ENCODE measurements at regions of chr15 and their contacts with region 1.

Region 1: DNA sequence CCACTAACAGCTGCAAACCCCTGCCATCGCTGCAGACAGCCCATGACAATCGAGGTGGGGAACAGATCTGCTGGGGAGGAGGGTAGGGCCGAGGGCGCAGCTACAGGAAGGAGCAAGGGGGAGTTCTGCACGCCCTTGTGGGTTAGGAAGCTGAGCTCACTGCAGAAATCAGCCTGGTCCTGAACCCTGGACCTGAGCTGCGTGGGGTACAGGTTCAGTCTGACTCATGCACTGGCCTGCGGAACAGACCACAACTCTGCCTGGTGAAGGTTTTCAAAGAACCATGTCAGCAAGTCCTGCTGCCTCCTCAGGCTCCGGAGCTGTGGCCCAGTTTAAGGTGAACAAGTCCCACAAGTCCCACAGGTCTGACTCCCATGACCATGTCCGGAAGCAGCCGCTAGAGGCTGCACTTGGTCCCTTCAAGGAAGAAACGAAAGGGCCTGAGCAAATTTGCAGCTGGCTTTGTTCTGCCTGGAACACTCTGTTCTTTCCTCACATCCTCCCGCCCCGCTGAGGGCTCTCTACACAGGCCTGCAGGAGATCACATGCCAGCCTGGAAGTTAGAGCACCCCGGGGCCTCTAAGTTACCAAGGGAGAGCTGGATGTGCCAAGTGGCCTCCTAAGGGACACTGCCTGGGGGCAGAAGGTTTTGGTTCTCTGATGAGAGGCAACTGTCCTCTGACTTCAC is 49.4 kb upstream of the AKAP13 start:
- DNase-seq: peak; percentile 90
- H3K4me3 Mint-ChIP-seq: peak overlapping the region; percentile 82
- H3K27ac Mint-ChIP-seq: peak overlapping the region; percentile 77
- H3K4me1 Mint-ChIP-seq: peaks cover 38% of the 10 kb centered on the region
- H3K27me3 Mint-ChIP-seq: no peaks in the 10 kb centered on the region

Region 2: DNA sequence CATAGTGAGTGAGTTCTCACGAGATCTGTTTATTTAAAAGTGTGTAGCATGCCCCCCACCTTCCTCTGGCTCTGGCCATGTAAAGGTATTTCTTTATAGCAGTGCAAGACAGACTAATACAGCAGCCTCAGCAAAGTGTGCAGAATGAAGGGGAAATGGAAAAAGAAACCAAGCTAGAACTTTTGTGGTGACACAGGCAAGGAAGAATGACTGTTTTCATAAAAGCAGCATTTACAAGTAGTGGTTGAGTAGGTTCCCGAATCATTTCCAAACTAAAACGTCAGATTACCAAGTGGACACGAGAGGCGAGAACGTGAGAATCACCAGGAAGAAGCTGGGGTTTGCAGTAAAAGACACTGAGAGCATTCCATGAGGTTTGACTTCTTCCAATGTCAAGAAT is 50.8 kb before region 1 on chr15:
- CTCF ChIA-PET with region 1: no interaction called
- POLR2A ChIA-PET with region 1: no interaction called
- intact Hi-C with region 1: no loop called
- DNase-seq: no peak
- H3K4me3 Mint-ChIP-seq: no peak overlapping the region
- H3K27ac Mint-ChIP-seq: no peak overlapping the region
- H3K4me1 Mint-ChIP-seq: peaks cover 5% of the 10 kb centered on the region
- H3K27me3 Mint-ChIP-seq: no peaks in the 10 kb centered on the region

Region 3: GRCh38 chr15:85318048-85318731 is 12.9 kb before region 1 on chr15:
- CTCF ChIA-PET with region 1: interaction called, 41 read pairs
- POLR2A ChIA-PET with region 1: interaction called, 8 read pairs
- intact Hi-C with region 1: loop called (anchors 2 kb)
- DNase-seq: peak; percentile 50
- H3K4me3 Mint-ChIP-seq: no peak overlapping the region
- H3K27ac Mint-ChIP-seq: peak overlapping the region; percentile 28
- H3K4me1 Mint-ChIP-seq: peaks cover 49% of the 10 kb centered on the region
- H3K27me3 Mint-ChIP-seq: no peaks in the 10 kb centered on the region

Region 4: DNA sequence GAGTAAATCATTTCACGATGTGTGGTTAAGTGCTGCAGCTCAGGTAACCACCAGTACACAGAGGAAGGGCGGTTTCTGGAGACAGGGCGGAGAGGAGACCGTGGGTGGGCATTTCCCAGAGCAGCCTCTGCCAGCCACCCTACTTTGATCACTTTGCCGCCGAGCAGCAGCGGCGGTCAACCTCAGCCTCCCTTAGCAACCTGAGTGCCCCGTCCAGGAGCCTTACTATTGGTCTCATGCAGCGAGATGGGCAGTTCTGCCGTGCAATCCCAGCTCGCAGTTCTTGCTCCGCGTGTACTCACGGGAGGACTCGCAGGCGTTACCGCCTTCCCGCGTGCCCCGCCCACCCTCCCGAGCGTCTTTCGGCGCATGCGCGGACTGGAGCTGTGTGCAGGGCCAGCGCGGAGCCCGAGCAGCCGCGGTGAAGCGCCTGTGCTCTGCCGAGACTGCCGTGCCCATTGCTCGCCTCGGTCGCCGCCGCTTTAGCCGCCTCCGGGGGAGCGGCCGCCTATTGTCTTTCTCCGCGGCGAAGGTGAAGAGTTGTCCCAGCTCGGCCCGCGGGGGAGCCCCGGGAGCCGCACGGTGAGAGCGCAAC is 49.3 kb after region 1 on chr15 and contains the start of gene AKAP13:
- CTCF ChIA-PET with region 1: interaction called, 10 read pairs
- POLR2A ChIA-PET with region 1: interaction called, 9 read pairs
- intact Hi-C with region 1: loop called (anchors 1 kb)
- DNase-seq: peak; percentile 98
- H3K4me3 Mint-ChIP-seq: peak within 1 kb of the TSS; percentile 85
- H3K27ac Mint-ChIP-seq: peak within 1 kb of the TSS; percentile 90
- H3K4me1 Mint-ChIP-seq: peaks cover 53% of the 10 kb centered on the region
- H3K27me3 Mint-ChIP-seq: no peaks in the 10 kb centered on the region
- total RNA-seq, gene AKAP13: 106 to 113 TPM

Region 5: GRCh38 chr15:85443593-85444087 is 112.6 kb after region 1 on chr15:
- CTCF ChIA-PET with region 1: interaction called, 5 read pairs
- POLR2A ChIA-PET with region 1: interaction called, 3 read pairs
- intact Hi-C with region 1: loop called (anchors 5 kb)
- DNase-seq: no peak
- H3K4me3 Mint-ChIP-seq: no peak overlapping the region
- H3K27ac Mint-ChIP-seq: peak overlapping the region; percentile 24
- H3K4me1 Mint-ChIP-seq: peaks cover 51% of the 10 kb centered on the region
- H3K27me3 Mint-ChIP-seq: no peaks in the 10 kb centered on the region

Region 6: GRCh38 chr15:85504749-85505676 is 174.0 kb after region 1 on chr15:
- CTCF ChIA-PET with region 1: interaction called, 20 read pairs
- POLR2A ChIA-PET with region 1: no interaction called
- intact Hi-C with region 1: no loop called
- DNase-seq: peak; percentile 38
- H3K4me3 Mint-ChIP-seq: no peak overlapping the region
- H3K27ac Mint-ChIP-seq: no peak overlapping the region
- H3K4me1 Mint-ChIP-seq: peaks cover 68% of the 10 kb centered on the region
- H3K27me3 Mint-ChIP-seq: no peaks in the 10 kb centered on the region

Region 7: DNA sequence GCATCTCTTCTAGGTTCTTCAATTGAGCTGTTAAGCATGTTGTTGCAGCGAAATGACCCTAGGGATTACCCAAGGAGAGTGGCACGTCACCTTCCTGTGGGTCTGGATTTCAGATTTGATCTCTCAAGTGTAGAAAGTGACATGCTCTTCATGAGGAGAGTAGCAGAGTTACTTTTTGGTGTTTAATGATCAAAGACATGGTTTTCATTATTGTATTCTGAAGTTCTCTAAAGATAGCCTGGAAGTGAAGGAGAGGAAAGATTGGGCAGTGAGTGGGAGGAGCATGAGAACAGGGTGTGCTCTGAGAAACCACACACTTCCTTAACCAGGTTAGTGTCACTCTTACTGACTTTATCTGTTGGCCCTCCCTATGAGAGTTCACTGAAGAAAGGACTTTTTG is 203.0 kb after region 1 on chr15:
- CTCF ChIA-PET with region 1: no interaction called
- POLR2A ChIA-PET with region 1: no interaction called
- intact Hi-C with region 1: no loop called
- DNase-seq: peak; percentile 22
- H3K4me3 Mint-ChIP-seq: no peak overlapping the region
- H3K27ac Mint-ChIP-seq: peak overlapping the region; percentile 60
- H3K4me1 Mint-ChIP-seq: peaks cover 41% of the 10 kb centered on the region
- H3K27me3 Mint-ChIP-seq: no peaks in the 10 kb centered on the region